PC-9 (cell line): ENCODE measurements at regions of chr3 and their contacts with region 1.

Region 1: GRCh38 chr3:99699841-99700240 is 61.4 kb downstream of the COL8A1 start:
- DNase-seq: no peak
- H3K4me3 ChIP-seq: no peak overlapping the region
- H3K27ac ChIP-seq: no peak overlapping the region
- H3K4me1 ChIP-seq: no peaks in the 10 kb centered on the region
- H3K27me3 ChIP-seq: no peaks in the 10 kb centered on the region
- CTCF ChIP-seq: no peak

Region 2: GRCh38 chr3:98623572-98624280 is 1076.1 kb before region 1 on chr3:
- CTCF ChIA-PET with region 1: interaction called, 12 read pairs
- POLR2A ChIA-PET with region 1: no interaction called
- intact Hi-C with region 1: no loop called
- DNase-seq: no peak
- H3K4me3 ChIP-seq: no peak overlapping the region
- H3K27ac ChIP-seq: no peak overlapping the region
- H3K4me1 ChIP-seq: no peaks in the 10 kb centered on the region
- H3K27me3 ChIP-seq: no peaks in the 10 kb centered on the region
- CTCF ChIP-seq: no peak